Activated T-helper 1 cell treated with anti-CD3 and anti-CD28 coated beads, Interleukin-12 subunit alpha, Interleukin-12 subunit beta, Interleukin-2, Interleukin-4 antibody, amounts not matched to agents 30 ng/mL and 10 ng/mL and 1 ng/mL, durations not matched to agents 14 hours and 24 hours and 36 hours (primary cell): ENCODE measurements at regions of chr7 and their contacts with region 1.

Region 1: GRCh38 chr7:101507791-101508252 is 121.3 kb downstream of the MYL10 start:
- DNase-seq: peak; percentile 23
- H3K4me3 Mint-ChIP-seq: peak overlapping the region; percentile 56
- H3K27ac Mint-ChIP-seq: peak overlapping the region; percentile 59
- H3K4me1 Mint-ChIP-seq: peaks cover 32% of the 10 kb centered on the region
- H3K27me3 Mint-ChIP-seq: peaks cover 16% of the 10 kb centered on the region

Region 2: GRCh38 chr7:101436857-101437576 is 70.8 kb before region 1 on chr7:
- intact Hi-C with region 1: loop called (anchors 10 kb)
- DNase-seq: no peak
- H3K4me3 Mint-ChIP-seq: no peak overlapping the region
- H3K27ac Mint-ChIP-seq: no peak overlapping the region
- H3K4me1 Mint-ChIP-seq: peaks cover 4% of the 10 kb centered on the region
- H3K27me3 Mint-ChIP-seq: peaks cover 15% of the 10 kb centered on the region

Region 3: GRCh38 chr7:101466871-101467270 is 41.0 kb before region 1 on chr7:
- intact Hi-C with region 1: no loop called
- DNase-seq: no peak
- H3K4me3 Mint-ChIP-seq: no peak overlapping the region
- H3K27ac Mint-ChIP-seq: no peak overlapping the region
- H3K4me1 Mint-ChIP-seq: peaks cover 14% of the 10 kb centered on the region
- H3K27me3 Mint-ChIP-seq: peaks cover 9% of the 10 kb centered on the region

Region 4: GRCh38 chr7:101754424-101755159 is 246.8 kb after region 1 on chr7:
- intact Hi-C with region 1: no loop called
- DNase-seq: no peak
- H3K4me3 Mint-ChIP-seq: peak overlapping the region; percentile 84
- H3K27ac Mint-ChIP-seq: peak overlapping the region; percentile 78
- H3K4me1 Mint-ChIP-seq: peaks cover 15% of the 10 kb centered on the region
- H3K27me3 Mint-ChIP-seq: no peaks in the 10 kb centered on the region